ENCODE measurements at regions of chr17 and their contacts with region 1.

Region 1: DNA sequence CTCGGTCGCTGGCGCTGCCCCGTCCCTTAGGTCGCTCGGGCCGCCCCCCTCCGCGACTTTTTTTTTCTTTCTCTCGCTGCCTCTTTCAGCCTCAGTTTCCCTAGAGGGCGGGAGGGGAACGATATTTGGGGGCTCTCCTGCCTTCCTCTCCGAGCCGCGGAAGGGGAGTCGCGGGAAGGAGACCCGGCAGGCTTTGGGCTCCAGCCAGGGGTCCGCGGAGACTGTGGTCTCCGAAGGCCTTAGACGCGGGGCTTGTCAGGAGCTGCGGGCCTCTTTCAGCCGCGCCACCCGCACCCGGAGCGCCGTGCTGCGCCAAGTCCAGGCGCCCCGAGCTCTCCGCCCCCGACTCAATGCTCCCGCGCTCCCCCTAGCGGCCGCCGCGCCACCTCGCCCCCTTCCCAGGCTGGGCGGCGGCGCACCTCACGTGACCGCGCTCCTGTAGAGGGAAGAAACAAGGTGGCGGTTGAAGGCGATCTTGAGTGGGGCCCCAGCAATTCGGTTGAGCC is at the start of gene LRRC37B:
- DNase-seq: peak; percentile 69 to 95 (median 90)

Region 2: DNA sequence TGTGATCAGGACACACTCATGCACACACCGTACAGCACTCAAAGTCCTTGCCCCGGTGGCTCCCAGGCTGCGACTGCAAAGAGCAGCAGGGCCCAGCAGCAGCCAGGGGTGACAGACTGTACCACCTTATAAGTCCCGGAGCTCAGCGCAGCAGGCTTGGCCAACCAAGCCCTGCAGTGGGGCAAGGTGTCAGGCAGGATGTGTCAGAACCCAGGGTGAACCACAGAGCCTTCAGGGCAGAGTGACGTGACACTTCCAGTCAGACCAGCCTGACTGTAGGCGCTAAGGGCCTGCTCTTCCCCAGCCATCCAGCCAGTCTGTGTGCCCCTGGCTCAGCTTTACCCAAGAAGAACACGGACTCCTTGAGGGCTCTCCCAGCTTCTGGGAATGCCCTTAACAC is 352.1 kb before region 1 on chr17:
- intact Hi-C with region 1: no loop called
- DNase-seq: no peak

Region 3: DNA sequence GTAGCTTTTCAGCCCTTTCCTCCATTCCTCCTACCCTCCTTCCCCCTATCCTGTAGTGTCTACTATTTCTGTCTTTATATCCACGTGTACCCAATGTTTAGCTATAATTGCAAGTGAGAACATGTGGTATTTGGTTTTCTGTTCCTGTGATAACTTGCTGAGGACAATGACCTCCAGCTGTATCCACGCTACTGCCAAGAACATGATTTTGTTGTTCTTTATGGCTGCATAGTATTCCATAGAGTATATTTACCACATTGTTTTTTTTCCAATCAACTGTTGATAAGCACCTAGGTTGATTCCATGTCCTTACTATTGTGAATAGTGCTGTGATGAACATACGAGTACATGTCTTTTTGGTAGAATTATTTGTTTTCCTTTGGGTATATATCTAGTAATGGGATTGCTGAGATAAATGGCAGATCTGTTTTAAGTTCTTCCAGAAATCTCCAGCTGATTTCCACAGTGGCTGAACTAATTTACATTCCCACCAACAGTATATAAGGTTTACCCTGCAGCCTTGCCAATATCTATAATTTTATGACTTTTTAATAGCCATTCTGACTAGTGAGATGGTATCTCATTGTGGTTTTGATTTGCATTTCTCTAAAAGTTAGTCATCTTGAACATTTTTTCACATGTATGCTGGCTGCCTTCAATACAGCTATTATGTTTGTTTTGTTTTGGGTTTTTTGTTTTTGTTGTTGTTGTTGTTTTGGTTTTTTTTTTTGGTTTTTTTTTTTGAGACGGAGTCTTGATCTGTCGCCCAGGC is 137.0 kb before region 1 on chr17:
- intact Hi-C with region 1: no loop called
- DNase-seq: no peak

Region 4: GRCh38 chr17:32142038-32142856 is 135.2 kb after region 1 on chr17 and contains the start of gene RHOT1:
- intact Hi-C with region 1: loop called (anchors 5 kb)
- DNase-seq: peak; percentile 38 to 90 (median 78)